ENCODE measurements at regions of chr2 and their contacts with region 1.

Region 1: GRCh38 chr2:196453613-196454047 is 185.9 kb upstream of the CCDC150 start:
- DNase-seq: peak; percentile 72
- ATAC-seq: peak; percentile 90
- H3K4me3 ChIP-seq: no peak overlapping the region
- H3K27ac ChIP-seq: peak overlapping the region; percentile 64
- H3K4me1 ChIP-seq: peaks cover 10% of the 10 kb centered on the region
- H3K27me3 ChIP-seq: no peaks in the 10 kb centered on the region
- CTCF ChIP-seq: peak; percentile 74 to 81 (median 79)
- EP300 ChIP-seq: no peak
- POLR2A ChIP-seq: no peak
- RAD21 ChIP-seq: peak; percentile 99

Region 2: DNA sequence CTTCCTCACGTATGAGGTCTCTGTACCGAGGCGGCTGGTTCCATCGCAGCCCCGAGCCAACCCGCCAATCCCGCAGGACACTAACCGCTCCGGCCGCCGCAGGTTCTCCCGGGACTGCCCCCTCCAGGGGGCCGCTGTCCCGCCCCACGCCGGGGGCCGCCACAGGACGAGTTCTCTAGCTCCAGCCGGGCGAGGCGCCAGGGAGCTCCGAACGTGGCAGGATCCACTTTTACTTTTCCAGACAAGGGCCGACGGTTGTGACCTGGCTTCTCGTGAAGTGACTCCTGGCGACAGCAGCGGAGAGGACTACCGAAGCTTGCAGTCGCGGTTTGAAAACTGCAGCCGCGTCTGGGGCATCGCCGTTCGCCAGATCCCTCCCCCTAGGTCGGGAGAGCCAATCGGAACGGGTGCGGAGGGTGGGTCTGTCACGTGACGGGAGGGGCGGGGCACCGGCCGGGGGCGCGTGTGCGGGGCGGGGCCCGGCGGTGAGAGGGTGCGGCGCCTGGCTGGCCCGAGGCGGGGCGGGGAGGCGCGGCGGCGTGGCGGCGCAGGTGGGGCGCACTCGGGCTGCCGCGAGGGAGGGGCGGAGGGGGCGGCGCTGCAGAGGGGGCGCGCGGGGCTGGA is 282.3 kb before region 1 on chr2 and contains the start of gene STK17B:
- CTCF ChIA-PET with region 1: no interaction called
- POLR2A ChIA-PET with region 1: no interaction called
- RAD21 ChIA-PET with region 1: interaction called, 4 read pairs
- SMC1A ChIA-PET with region 1: interaction called, 11 read pairs
- in situ Hi-C with region 1: no loop called
- intact Hi-C with region 1: no loop called
- DNase-seq: peak; percentile 82
- ATAC-seq: peak; percentile 64
- H3K4me3 ChIP-seq: peak within 1 kb of the TSS; percentile 98
- H3K27ac ChIP-seq: peak within 1 kb of the TSS; percentile 87
- H3K4me1 ChIP-seq: peaks cover 15% of the 10 kb centered on the region
- H3K27me3 ChIP-seq: no peaks in the 10 kb centered on the region
- CTCF ChIP-seq: no peak
- EP300 ChIP-seq: 0 out of 4 replicates have a peak, but pooled peaks of 1 of the 2 experiments have one; percentile 34
- POLR2A ChIP-seq: peak; percentile 99
- RAD21 ChIP-seq: peak; percentile 16; the same call in 1 of the 2 replicates
- polyA plus RNA-seq, gene STK17B: 21.2 to 28.2 TPM

Region 3: GRCh38 chr2:196309691-196310090 is 143.9 kb before region 1 on chr2:
- CTCF ChIA-PET with region 1: interaction called, 220 read pairs
- POLR2A ChIA-PET with region 1: no interaction called
- RAD21 ChIA-PET with region 1: interaction called, 13 read pairs
- SMC1A ChIA-PET with region 1: interaction called, 223 read pairs
- in situ Hi-C with region 1: no loop called
- intact Hi-C with region 1: no loop called
- DNase-seq: no peak
- ATAC-seq: no peak
- H3K4me3 ChIP-seq: no peak overlapping the region
- H3K27ac ChIP-seq: no peak overlapping the region
- H3K4me1 ChIP-seq: no peaks in the 10 kb centered on the region
- H3K27me3 ChIP-seq: no peaks in the 10 kb centered on the region
- CTCF ChIP-seq: no peak
- EP300 ChIP-seq: no peak
- POLR2A ChIP-seq: no peak
- RAD21 ChIP-seq: no peak

Region 4: DNA sequence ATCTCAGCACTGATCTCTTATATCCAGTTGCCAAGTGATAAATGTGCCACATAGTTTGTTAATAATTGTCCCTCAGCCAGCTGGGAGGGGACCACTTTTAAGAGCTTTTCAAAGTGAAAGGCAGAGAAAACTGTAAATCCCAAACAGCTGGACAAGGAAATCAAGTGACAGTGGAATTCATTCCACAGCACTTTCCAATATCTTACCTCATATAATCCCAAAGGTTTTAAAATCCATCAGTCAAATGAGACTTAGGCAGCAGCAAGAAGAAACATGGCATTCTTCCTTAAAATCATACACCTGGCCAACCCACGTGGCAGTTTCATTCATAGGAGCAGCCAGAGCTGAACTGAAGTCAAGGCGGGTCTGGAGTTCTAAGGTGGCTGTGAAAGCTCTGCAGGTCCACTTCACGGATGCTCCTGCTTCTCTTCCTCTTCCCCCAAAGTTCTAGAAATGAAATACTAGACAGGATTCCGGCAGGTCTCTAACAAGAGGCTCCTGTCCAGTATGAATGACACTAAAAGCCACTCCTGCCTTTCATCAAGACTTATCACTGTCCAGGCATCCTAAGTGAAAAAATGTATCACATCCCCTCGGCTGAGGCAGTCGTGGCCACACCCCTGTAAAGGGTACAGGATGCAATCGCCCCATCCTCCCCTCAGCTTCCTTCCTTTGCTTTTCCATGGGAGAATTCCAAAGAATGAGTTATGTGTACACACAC is 91.9 kb before region 1 on chr2:
- CTCF ChIA-PET with region 1: interaction called, 12 read pairs
- POLR2A ChIA-PET with region 1: no interaction called
- RAD21 ChIA-PET with region 1: interaction called, 11 read pairs
- SMC1A ChIA-PET with region 1: interaction called, 13 read pairs
- in situ Hi-C with region 1: no loop called
- intact Hi-C with region 1: no loop called
- DNase-seq: no peak
- ATAC-seq: no peak
- H3K4me3 ChIP-seq: no peak overlapping the region
- H3K27ac ChIP-seq: no peak overlapping the region
- H3K4me1 ChIP-seq: no peaks in the 10 kb centered on the region; the same call in 1 of the 2 replicates
- H3K27me3 ChIP-seq: no peaks in the 10 kb centered on the region
- CTCF ChIP-seq: no peak
- EP300 ChIP-seq: no peak
- POLR2A ChIP-seq: no peak
- RAD21 ChIP-seq: no peak

Region 5: GRCh38 chr2:196413821-196414274 is 39.8 kb before region 1 on chr2:
- CTCF ChIA-PET with region 1: interaction called, 94 read pairs
- POLR2A ChIA-PET with region 1: interaction called, 3 read pairs
- RAD21 ChIA-PET with region 1: interaction called, 72 read pairs
- SMC1A ChIA-PET with region 1: interaction called, 53 read pairs
- in situ Hi-C with region 1: no loop called
- intact Hi-C with region 1: loop called (anchors 2 kb)
- DNase-seq: peak; percentile 73
- ATAC-seq: peak; percentile 87
- H3K4me3 ChIP-seq: no peak overlapping the region
- H3K27ac ChIP-seq: peak overlapping the region; percentile 91
- H3K4me1 ChIP-seq: peaks cover 51% of the 10 kb centered on the region
- H3K27me3 ChIP-seq: no peaks in the 10 kb centered on the region
- CTCF ChIP-seq: no peak
- EP300 ChIP-seq: 0 out of 4 replicates have a peak, but pooled peaks of 1 of the 2 experiments have one; percentile 24
- POLR2A ChIP-seq: peak; percentile 74
- RAD21 ChIP-seq: 0 out of 2 replicates have a peak, but pooled peaks have one; percentile 14

Region 6: DNA sequence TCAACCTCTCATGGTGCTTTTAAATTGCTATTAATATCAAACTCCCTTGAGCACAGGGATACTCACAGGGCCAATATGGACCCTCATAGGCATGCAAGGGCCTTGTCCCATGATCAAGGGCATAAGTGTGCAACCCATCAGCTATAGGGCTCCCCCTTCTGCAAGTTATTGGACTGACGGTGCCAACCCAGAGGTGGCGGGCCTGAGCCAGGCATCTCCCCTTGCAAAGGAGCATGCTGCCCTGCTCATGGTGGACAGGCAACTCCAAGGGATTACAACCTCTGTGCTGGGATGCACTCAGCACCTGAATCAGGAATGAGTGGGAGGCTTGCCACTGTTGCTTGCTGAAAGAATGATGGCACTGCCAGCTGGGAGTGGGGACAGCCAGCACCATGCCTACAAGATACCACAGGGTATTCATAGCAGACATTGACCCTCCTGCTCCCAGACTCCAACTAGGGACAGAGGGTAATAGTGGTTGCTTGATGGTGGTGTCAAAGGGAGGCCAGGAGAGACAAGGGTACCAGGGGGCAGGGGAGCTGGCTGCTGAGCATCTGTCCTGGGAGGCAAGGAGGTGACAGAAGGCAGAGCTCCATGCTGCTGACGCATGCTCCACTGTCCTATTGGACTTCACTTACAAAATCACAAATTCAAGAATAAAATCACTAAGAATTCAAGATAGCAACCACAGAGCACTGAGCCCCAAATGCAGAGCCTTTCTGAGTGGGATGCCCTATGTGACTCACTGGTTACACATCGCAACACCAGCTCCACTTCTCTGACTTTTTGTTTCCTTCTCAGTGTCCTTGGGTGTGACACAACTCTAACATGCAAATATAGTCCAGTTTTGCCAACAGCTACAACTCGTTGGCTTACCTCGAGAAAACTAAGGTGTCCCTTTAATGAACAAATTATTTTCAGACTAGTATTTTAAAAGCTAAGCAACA is 28.8 kb after region 1 on chr2:
- CTCF ChIA-PET with region 1: interaction called, 10 read pairs
- POLR2A ChIA-PET with region 1: no interaction called
- RAD21 ChIA-PET with region 1: interaction called, 8 read pairs
- SMC1A ChIA-PET with region 1: interaction called, 11 read pairs
- in situ Hi-C with region 1: no loop called
- intact Hi-C with region 1: no loop called
- DNase-seq: no peak
- ATAC-seq: peak; percentile 56; the same call in 2 of the 3 replicates
- H3K4me3 ChIP-seq: no peak overlapping the region
- H3K27ac ChIP-seq: no peak overlapping the region
- H3K4me1 ChIP-seq: no peaks in the 10 kb centered on the region
- H3K27me3 ChIP-seq: no peaks in the 10 kb centered on the region; a peak in 1 of 4 replicates
- CTCF ChIP-seq: no peak
- EP300 ChIP-seq: no peak
- POLR2A ChIP-seq: no peak
- RAD21 ChIP-seq: no peak

Measured in GM12878 (cell line).